ENCODE measurements at regions of chr21 and their contacts with region 1.

Region 1: DNA sequence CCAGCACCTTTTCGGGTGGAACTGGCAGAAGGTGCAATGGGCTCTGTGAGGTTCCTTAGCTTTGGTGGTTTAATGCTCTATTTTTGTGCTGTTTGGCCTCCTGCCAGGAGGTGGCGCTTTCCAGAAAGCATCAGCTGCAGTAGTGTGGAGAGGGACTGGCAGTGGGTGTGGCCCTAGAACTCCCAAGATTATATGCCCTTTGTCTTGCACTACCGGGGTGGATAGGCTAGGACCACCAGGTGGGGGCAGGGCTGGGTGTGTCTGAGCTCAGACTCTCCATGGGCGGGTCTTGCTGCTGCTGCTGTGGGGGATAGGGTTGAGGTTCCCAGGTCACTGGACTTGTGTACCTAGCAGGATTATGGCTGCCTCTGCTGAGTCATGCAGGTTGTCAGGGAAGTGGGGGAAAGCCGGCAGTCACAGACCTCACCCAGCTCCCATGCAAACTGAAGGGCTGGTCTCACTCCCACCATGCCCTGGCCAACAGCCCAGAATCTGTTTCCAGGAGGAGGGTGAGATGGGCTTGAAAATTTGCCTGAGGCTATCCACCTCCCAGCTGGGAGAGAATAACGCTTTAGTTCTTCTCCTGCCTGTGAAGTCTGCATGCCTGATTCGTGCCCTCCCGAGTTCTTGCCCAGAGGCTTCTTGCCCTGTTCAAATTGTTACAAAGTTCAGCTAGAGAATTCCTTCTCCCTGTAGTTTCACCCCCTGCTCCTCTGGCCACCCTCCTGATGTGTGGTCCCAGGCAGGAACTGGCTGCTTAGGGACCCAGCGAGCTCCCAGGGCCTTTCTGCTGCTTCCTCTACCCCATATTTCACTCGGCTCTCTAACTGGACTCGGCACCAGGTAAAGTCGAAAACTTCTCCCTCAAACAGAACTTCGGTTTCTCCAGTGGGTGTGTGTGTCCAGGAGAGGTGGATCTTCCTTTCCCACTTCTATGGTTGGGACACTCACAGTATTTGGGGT is 76.5 kb upstream of the BTG3 start:
- DNase-seq: peak; percentile 3 to 73 (median 42)
- ATAC-seq: no peak
- H3K4me3 ChIP-seq: no peak overlapping the region
- H3K4me3 Mint-ChIP-seq: no peak overlapping the region
- H3K27ac ChIP-seq: no peak overlapping the region
- H3K27ac Mint-ChIP-seq: no peak overlapping the region
- H3K4me1 ChIP-seq: peaks cover 10% of the 10 kb centered on the region
- H3K4me1 Mint-ChIP-seq: peaks cover 37% of the 10 kb centered on the region
- H3K27me3 ChIP-seq: no peaks in the 10 kb centered on the region
- H3K27me3 Mint-ChIP-seq: no peaks in the 10 kb centered on the region
- CTCF ChIP-seq: peak; percentile 32

Region 2: DNA sequence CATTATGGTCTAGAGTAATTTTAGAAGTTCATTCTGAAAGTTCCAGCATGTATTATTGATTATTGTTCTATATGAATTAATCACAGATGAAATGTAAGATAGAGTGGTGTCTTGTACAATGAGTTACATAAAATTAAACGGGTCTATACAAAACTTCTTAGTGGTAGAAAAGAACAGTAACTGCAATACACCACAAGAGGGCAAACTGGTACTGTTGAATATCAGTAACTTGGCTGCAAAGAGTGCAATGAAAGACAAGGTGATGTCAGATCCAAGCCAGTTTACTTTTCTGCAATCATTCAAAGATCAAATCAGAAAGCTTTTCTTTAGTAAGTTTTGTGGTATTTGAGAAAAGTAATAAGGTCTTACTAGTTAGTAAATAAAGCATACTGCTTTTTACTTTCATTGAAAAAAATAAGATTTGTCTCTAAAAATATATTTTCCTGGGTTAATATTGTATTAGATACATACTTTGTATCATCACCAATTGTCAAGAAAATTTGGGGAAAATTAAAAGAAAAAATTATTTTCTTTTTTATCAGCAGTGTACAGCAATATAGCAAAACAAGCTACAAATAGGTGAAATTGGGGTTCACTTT is 10.1 kb before region 1 on chr21:
- CTCF ChIA-PET with region 1: interaction called, 12 read pairs
- POLR2A ChIA-PET with region 1: no interaction called
- intact Hi-C with region 1: no loop called
- DNase-seq: peak in 3 of 9 experiments; percentile 13 to 80 (median 75)
- ATAC-seq: peak; percentile 96
- H3K4me3 ChIP-seq: no peak overlapping the region
- H3K4me3 Mint-ChIP-seq: no peak overlapping the region
- H3K27ac ChIP-seq: no peak overlapping the region
- H3K27ac Mint-ChIP-seq: no peak overlapping the region
- H3K4me1 ChIP-seq: no peaks in the 10 kb centered on the region
- H3K4me1 Mint-ChIP-seq: no peaks in the 10 kb centered on the region
- H3K27me3 ChIP-seq: no peaks in the 10 kb centered on the region
- H3K27me3 Mint-ChIP-seq: no peaks in the 10 kb centered on the region
- CTCF ChIP-seq: peak; percentile 92

Region 3: GRCh38 chr21:17732306-17732705 is 43.1 kb after region 1 on chr21:
- CTCF ChIA-PET with region 1: no interaction called
- POLR2A ChIA-PET with region 1: no interaction called
- intact Hi-C with region 1: loop called in 1 of 2 experiments (anchors 10 kb)
- DNase-seq: no peak
- ATAC-seq: no peak
- H3K4me3 ChIP-seq: no peak overlapping the region
- H3K4me3 Mint-ChIP-seq: no peak overlapping the region
- H3K27ac ChIP-seq: no peak overlapping the region
- H3K27ac Mint-ChIP-seq: no peak overlapping the region
- H3K4me1 ChIP-seq: no peaks in the 10 kb centered on the region
- H3K4me1 Mint-ChIP-seq: no peaks in the 10 kb centered on the region
- H3K27me3 ChIP-seq: no peaks in the 10 kb centered on the region
- H3K27me3 Mint-ChIP-seq: no peaks in the 10 kb centered on the region
- CTCF ChIP-seq: no peak

Region 4: GRCh38 chr21:17753726-17754125 is 64.5 kb after region 1 on chr21:
- CTCF ChIA-PET with region 1: no interaction called
- POLR2A ChIA-PET with region 1: no interaction called
- intact Hi-C with region 1: no loop called
- DNase-seq: no peak
- ATAC-seq: no peak
- H3K4me3 ChIP-seq: no peak overlapping the region
- H3K4me3 Mint-ChIP-seq: no peak overlapping the region
- H3K27ac ChIP-seq: no peak overlapping the region
- H3K27ac Mint-ChIP-seq: no peak overlapping the region
- H3K4me1 ChIP-seq: no peaks in the 10 kb centered on the region
- H3K4me1 Mint-ChIP-seq: no peaks in the 10 kb centered on the region
- H3K27me3 ChIP-seq: no peaks in the 10 kb centered on the region
- H3K27me3 Mint-ChIP-seq: no peaks in the 10 kb centered on the region
- CTCF ChIP-seq: no peak

Region 5: GRCh38 chr21:17903029-17903806 is 214.0 kb after region 1 on chr21:
- CTCF ChIA-PET with region 1: interaction called, 10 read pairs
- POLR2A ChIA-PET with region 1: no interaction called
- intact Hi-C with region 1: no loop called
- DNase-seq: peak in 2 of 9 experiments; percentile 57 to 66
- ATAC-seq: peak; percentile 56
- H3K4me3 ChIP-seq: no peak overlapping the region
- H3K4me3 Mint-ChIP-seq: no peak overlapping the region
- H3K27ac ChIP-seq: no peak overlapping the region
- H3K27ac Mint-ChIP-seq: no peak overlapping the region
- H3K4me1 ChIP-seq: no peaks in the 10 kb centered on the region
- H3K4me1 Mint-ChIP-seq: peaks cover 4% of the 10 kb centered on the region
- H3K27me3 ChIP-seq: no peaks in the 10 kb centered on the region
- H3K27me3 Mint-ChIP-seq: no peaks in the 10 kb centered on the region
- CTCF ChIP-seq: peak; percentile 60